Adrenal gland (tissue), 19 donors: ENCODE measurements at regions of chr2 and their contacts with region 1.

Region 1: GRCh38 chr2:84516234-84516986 is at the start of gene DNAH6:
- DNase-seq: peak; percentile 87 to 98 (median 94)
- H3K4me3 ChIP-seq: peak within 1 kb of the TSS in 3 of 4 donors; percentile 15 to 56 (median 19)
- H3K27ac ChIP-seq: peak within 1 kb of the TSS in 1 of 5 donors; percentile 27
- H3K4me1 ChIP-seq: peaks cover 0 to 9% of the 10 kb centered on the region in 2 donors
- H3K27me3 ChIP-seq: no peaks in the 10 kb centered on the region
- CTCF ChIP-seq: no peak
- POLR2A ChIP-seq: no peak
- total RNA-seq, gene DNAH6: 0.06 to 0.74 (median 0.28) TPM

Region 2: DNA sequence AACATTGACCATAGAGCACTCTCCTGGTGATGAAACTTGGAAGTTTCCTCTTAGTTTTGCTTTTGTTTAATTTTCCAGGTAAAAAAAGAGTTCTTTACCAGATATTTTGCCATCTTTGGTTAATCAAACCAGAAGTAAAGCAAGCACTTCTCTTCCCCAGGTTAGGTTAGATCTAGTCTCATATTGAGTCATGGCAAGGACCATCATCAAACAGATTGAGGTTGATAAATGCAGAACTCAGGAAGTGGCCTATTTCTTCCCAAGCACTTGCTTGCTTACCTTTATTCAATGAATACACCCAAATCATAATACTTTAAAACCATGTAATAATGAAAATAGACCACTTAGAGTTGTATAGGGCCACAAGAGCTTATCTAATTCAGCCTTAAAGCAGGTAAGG is 23.3 kb after region 1 on chr2:
- intact Hi-C with region 1: no loop called
- DNase-seq: no peak
- H3K4me3 ChIP-seq: no peak overlapping the region
- H3K27ac ChIP-seq: no peak overlapping the region
- H3K4me1 ChIP-seq: no peaks in the 10 kb centered on the region
- H3K27me3 ChIP-seq: no peaks in the 10 kb centered on the region
- CTCF ChIP-seq: no peak
- POLR2A ChIP-seq: no peak

Region 3: DNA sequence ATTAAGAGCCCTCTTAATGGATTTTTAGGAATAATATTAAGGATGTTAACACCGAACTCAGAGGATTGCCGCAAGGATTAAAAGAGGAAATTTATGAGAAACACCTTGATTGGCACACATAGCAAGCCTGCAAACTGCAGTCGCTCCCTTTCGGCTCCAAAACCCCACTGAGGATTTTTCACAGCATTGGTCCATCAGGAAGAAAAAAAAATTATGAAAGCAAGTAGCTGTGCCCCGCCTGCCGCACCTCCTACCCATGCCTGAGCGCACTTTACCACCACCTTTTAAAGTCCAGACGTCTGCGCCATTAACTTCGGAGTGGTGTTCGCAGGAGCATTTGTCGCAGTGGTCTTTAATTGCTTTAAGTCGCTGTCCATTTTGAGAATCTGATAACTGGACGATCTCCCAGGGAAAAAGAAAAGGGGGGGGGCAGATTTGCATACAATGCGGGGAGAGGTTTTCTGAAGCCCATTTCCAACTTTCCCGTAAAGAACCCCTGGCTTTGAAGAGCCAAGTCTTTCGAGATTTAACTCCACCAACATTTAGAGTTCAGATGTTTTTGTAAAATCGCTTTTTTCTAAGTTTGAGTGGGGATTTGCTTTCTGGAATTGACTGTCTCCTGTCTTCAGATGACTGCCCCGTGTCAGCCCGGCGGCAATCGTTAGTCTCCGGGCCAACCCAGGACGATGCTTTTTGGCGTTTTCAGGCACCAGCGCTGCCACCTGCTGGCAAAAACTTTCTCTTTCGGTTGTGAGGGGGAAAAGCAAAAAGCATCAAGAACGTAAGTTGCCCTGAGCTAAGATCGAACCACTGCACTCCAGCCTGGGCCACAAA is 365.4 kb after region 1 on chr2:
- intact Hi-C with region 1: loop called in 1 of 2 experiments (anchors 10 kb)
- DNase-seq: peak; percentile 70 to 88 (median 82)
- H3K4me3 ChIP-seq: peak overlapping the region in 2 of 4 donors; percentile 34 to 52
- H3K27ac ChIP-seq: no peak overlapping the region
- H3K4me1 ChIP-seq: peaks cover 16 to 21% of the 10 kb centered on the region in 2 donors
- H3K27me3 ChIP-seq: peaks cover 30% of the 10 kb centered on the region
- CTCF ChIP-seq: peak; percentile 49 to 71 (median 68)
- POLR2A ChIP-seq: no peak